ENCODE measurements at regions of chr16 and their contacts with region 1.

Region 1: DNA sequence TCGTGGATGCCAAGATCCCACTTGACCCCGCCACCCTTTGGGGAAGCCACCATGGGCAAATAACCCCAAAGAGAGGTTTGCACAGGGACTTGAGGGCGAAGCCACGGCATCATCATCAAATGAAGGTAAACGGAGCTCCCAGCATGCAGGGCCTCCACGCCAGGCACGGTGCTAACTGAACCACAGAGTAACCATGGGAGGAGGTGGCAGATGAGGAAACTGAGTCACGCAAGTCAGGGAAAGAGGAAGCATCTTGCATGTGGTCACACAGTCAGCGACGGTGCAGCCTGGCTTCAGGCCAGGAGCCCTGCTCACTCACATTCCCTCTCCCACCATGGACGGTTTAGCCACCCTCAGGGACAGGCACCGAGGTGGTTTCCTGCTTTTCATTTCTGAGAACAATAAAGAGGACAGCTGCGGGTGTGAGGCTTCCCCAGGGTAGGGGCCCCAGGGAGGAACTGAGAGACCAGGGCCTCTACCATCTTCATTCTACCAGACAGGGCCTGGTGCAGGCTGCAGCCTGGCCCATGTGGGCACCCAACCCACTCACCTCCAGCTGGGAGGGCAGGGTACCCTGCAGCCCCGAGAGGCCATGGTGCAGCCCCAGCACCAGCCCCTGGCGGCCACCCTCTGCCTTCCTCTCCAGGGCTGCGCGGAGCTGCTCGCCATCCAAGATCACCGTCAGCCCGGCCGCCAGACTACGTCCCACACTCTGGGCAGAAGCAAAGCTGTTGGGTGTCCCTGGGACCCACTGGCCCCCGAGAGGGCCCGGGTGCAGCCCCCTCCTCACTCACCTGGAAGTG is 78.3 kb downstream of the RMI2 start:
- DNase-seq: no peak
- ATAC-seq: peak; percentile 90
- H3K4me3 Mint-ChIP-seq: no peak overlapping the region
- H3K27ac Mint-ChIP-seq: no peak overlapping the region
- H3K4me1 Mint-ChIP-seq: peaks cover 9% of the 10 kb centered on the region
- H3K27me3 Mint-ChIP-seq: no peaks in the 10 kb centered on the region
- CTCF ChIP-seq: no peak

Region 2: DNA sequence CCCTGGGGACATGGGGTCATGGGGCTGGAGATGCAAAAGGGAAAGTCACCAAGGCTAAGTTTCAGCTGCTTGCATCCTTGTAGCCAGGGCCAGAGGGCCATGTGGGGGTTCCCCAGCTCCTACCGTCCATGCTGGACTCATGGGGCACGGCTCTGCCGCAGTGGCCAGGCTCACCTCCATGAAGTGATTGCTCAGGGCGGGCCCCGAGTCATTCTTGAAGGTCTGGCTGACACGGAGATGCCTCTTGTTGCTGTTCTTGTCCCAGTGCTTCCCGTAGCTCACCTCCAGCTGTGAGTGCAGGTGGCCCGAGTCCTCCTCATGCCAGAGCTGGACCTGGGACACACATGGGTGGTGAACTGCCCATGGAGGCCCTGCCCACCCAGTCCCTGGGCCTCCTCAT is 36.2 kb after region 1 on chr16:
- CTCF ChIA-PET with region 1: no interaction called
- POLR2A ChIA-PET with region 1: no interaction called
- intact Hi-C with region 1: no loop called
- DNase-seq: no peak
- ATAC-seq: no peak
- H3K4me3 Mint-ChIP-seq: no peak overlapping the region
- H3K27ac Mint-ChIP-seq: no peak overlapping the region
- H3K4me1 Mint-ChIP-seq: no peaks in the 10 kb centered on the region
- H3K27me3 Mint-ChIP-seq: no peaks in the 10 kb centered on the region
- CTCF ChIP-seq: no peak

Region 3: GRCh38 chr16:11499295-11500089 is 76.0 kb after region 1 on chr16:
- CTCF ChIA-PET with region 1: no interaction called
- POLR2A ChIA-PET with region 1: interaction called, 11 read pairs
- intact Hi-C with region 1: no loop called
- DNase-seq: no peak
- ATAC-seq: peak; percentile 37
- H3K4me3 Mint-ChIP-seq: no peak overlapping the region
- H3K27ac Mint-ChIP-seq: no peak overlapping the region
- H3K4me1 Mint-ChIP-seq: peaks cover 26% of the 10 kb centered on the region
- H3K27me3 Mint-ChIP-seq: no peaks in the 10 kb centered on the region
- CTCF ChIP-seq: no peak

Measured in activated B cell treated with CpG ODN at 0.5 μM for 24 hours (primary cell).